ENCODE measurements at regions of chr1 and their contacts with region 1.

Region 1: DNA sequence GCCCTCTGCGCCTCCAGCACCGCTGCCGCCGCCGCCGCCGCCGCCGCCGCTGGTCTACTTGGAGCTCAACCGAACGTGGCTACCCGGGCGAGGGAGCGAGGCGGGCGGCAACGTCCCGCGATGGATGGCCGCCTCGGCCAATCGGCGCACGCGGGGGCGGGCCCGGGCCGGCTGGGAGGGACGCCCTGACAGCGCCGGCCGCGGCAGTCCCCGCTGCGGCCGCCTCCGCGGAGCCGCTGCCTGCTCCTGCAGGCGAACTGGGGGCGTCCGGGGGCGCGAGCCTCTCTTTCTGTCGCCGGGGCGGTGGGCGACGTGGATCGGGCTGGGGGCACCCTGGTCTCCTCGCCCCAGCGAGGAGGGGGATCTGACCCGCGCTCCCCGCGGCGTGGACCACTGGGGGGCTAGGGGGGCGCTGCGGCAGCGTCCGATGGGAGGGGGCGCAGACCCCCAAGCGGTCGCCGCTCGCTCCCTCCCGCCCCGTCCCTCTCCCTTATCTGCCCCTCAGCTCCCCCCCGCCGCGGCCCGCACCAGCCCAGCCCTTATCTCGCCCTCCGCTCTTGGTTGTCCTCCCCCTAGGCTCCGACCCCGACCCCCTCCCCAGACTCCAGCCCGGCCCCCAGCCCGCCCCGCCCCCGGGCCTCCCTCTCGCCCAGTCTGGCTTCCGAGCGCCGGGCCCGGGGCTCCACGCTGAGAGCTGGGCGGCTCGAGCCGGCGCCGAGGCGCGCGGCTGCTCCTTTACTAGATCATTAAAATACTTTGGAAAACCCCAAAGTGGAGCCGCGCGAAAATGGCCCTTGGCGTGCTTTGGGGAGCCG is at the start of gene SSBP3:
- DNase-seq: peak; percentile 94 to 96 (median 94)
- ATAC-seq: peak; percentile 78 to 95 (median 90)
- H3K4me3 ChIP-seq: peak within 1 kb of the TSS; percentile 74 to 98 (median 90)
- H3K27ac ChIP-seq: peak within 1 kb of the TSS; percentile 72 to 97 (median 92)
- H3K4me1 ChIP-seq: peaks cover 4 to 56% (median 37%) of the 10 kb centered on the region in 12 donors
- H3K27me3 ChIP-seq: no peaks in the 10 kb centered on the region
- CTCF ChIP-seq: peak in 3 of 12 donors; percentile 4 to 31 (median 15)
- POLR2A ChIP-seq: peak; percentile 71 to 97
- total RNA-seq, gene SSBP3: 20.8 to 61.8 (median 48.3) TPM

Region 2: DNA sequence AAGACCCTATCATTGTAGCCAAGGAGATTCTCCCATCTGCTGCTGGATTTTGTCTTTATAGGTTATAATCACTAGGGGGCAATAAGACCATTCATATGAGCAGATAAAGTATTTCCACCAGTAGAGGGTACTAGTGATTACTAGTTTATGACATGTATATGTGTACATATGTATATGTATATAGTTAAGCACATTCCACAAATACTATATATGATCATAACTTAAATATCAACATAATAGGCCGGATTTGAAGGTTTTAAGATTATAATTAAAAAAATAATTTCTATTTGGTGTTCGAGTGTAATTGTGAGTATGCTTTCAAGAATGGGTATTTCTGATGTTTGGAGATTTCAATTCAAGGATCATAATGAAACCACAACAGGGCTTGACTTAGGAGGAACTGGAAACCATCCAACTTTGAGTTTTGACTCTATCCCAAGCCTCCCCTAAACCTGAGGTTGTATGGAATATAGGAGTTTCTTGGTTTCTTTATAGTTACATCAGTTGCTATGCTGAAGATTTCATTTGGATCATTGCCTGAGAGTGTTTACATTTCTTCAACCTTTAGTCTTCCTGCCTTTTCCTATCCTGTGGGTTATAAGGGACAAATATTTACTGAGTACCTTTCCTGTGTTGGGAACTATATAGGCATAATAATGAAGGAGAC is 336.2 kb before region 1 on chr1:
- intact Hi-C with region 1: loop called in 3 of 10 experiments (anchors 5 to 10 kb)
- DNase-seq: no peak
- ATAC-seq: peak; percentile 51 to 72 (median 60)
- H3K4me3 ChIP-seq: no peak overlapping the region
- H3K27ac ChIP-seq: no peak overlapping the region
- H3K4me1 ChIP-seq: no peaks in the 10 kb centered on the region
- H3K27me3 ChIP-seq: no peaks in the 10 kb centered on the region
- CTCF ChIP-seq: peak; percentile 53 to 90 (median 78)
- POLR2A ChIP-seq: no peak

Region 3: DNA sequence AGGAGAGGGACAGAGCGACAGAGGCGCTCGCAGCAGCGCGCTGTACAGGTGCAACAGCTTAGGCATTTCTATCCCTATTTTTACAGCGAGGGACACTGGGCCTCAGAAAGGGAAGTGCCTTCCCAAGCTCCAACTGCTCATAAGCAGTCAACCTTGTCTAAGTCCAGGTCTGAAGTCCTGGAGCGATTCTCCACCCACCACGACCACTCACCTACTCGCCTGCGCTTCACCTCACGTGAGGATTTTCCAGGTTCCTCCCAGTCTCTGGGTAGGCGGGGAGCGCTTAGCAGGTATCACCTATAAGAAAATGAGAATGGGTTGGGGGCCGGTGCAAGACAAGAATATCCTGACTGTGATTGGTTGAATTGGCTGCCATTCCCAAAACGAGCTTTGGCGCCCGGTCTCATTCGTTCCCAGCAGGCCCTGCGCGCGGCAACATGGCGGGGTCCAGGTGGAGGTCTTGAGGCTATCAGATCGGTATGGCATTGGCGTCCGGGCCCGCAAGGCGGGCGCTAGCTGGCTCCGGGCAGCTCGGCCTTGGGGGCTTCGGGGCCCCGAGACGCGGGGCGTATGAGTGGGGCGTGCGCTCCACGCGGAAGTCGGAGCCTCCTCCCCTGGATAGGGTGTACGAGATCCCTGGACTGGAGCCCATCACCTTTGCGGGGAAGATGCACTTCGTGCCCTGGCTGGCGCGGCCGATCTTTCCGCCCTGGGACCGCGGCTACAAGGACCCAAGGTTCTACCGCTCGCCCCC is 206.6 kb before region 1 on chr1 and contains the starts of genes CYB5RL and MRPL37:
- intact Hi-C with region 1: loop called in 7 of 10 experiments (anchors 2 to 10 kb)
- DNase-seq: peak; percentile 92 to 96 (median 94)
- ATAC-seq: peak; percentile 98 to 100 (median 99)
- H3K4me3 ChIP-seq: peak within 1 kb of the TSS; percentile 62 to 96 (median 84)
- H3K27ac ChIP-seq: peak within 1 kb of the TSS; percentile 6 to 91 (median 72)
- H3K4me1 ChIP-seq: peaks cover 0 to 30% (median 19%) of the 10 kb centered on the region in 12 donors
- H3K27me3 ChIP-seq: no peaks in the 10 kb centered on the region
- CTCF ChIP-seq: no peak
- POLR2A ChIP-seq: peak in 1 of 2 donors; percentile 65
- total RNA-seq, gene CYB5RL: 2.8 to 7.5 (median 4.4) TPM
- total RNA-seq, gene MRPL37: 75.6 to 122 (median 89.3) TPM

Region 4: DNA sequence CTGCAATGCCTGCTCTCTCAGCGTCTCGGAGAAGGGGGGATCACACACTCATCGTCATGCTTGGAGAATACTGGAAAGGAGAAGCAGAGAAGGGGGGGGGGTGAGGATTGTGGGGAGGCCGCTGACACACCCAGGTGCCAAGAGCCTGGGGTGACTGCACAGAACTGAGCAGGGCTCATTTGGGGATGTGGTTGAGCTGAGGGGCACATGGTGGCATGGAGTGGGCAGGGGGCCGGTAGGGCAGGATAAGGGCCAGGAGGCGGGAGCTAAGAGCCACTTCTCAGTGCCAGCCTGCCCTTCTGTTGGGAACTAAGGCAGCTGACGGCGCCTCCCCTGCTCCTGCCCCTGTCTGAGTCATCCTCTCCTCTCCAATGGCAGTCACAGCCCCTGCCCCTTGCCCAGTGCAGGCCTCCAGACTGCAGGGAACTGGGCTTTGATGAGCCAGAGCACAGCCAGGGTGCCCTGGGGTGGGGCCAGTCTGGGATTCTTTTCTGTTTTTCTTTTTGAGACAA is 179.4 kb before region 1 on chr1:
- intact Hi-C with region 1: loop called in 1 of 10 experiments (anchors 10 kb)
- DNase-seq: no peak
- ATAC-seq: peak in 2 of 4 donors; percentile 44 to 55
- H3K4me3 ChIP-seq: no peak overlapping the region
- H3K27ac ChIP-seq: no peak overlapping the region
- H3K4me1 ChIP-seq: peaks cover 0 to 24% (median 4%) of the 10 kb centered on the region in 12 donors
- H3K27me3 ChIP-seq: no peaks in the 10 kb centered on the region
- CTCF ChIP-seq: no peak
- POLR2A ChIP-seq: no peak

Region 5: DNA sequence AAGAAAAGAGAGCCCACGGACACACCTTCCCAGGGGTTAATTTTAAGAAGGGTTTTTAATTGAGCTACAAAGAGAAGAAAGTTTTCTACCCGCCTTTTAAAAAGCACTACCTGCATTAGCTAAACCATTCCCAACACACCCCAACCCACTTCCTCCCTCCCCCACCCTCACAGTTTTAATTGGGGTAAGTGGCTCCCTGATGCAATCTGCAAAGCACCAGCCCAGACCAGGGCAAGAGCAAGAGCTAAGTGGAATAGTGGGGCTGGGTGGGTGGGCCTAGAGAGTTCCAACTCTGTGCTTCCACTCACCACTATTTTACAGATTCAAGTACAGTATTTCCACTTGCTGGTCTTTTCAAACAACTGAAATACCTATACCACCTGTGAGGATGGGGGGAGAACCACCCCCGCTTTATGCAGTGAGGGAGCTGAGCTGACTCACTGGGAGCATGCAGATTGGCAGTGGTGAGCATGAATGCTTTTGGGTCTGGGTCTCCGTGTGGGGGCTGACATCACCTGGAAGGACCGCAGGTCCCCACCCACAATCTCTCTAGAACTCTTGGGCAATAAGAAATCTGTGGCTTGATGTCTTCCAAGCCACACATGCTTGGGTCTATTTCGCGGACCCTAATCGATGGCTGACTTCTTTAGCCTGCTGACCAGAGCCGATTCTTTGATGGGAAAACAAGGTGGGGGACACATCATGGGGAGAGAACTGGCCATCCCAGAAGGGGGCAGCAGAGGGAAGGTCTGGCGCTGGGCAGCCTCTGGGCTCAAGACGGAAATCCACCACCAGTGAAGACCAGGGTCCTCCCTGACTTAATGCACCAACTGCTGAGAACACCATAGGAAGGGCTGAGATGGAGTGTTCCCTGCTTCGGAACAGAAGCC is 95.9 kb before region 1 on chr1:
- intact Hi-C with region 1: loop called in 9 of 10 experiments (anchors 1 to 5 kb)
- DNase-seq: peak in 3 of 5 donors; percentile 45 to 64 (median 56)
- ATAC-seq: peak; percentile 10 to 50 (median 36)
- H3K4me3 ChIP-seq: no peak overlapping the region
- H3K27ac ChIP-seq: peak overlapping the region in 5 of 12 donors; percentile 20 to 67 (median 42)
- H3K4me1 ChIP-seq: peaks cover 0 to 87% (median 52%) of the 10 kb centered on the region in 12 donors
- H3K27me3 ChIP-seq: no peaks in the 10 kb centered on the region
- CTCF ChIP-seq: peak; percentile 41 to 72 (median 61)
- POLR2A ChIP-seq: no peak

Region 6: GRCh38 chr1:54361342-54361741 is 45.2 kb before region 1 on chr1:
- intact Hi-C with region 1: loop called in 7 of 10 experiments (anchors 2 to 10 kb)
- DNase-seq: peak in 1 of 5 donors; percentile 29
- ATAC-seq: no peak
- H3K4me3 ChIP-seq: no peak overlapping the region
- H3K27ac ChIP-seq: peak overlapping the region in 2 of 12 donors; percentile 4 to 27
- H3K4me1 ChIP-seq: peaks cover under 1 to 79% (median 50%) of the 10 kb centered on the region in 12 donors
- H3K27me3 ChIP-seq: no peaks in the 10 kb centered on the region
- CTCF ChIP-seq: peak in 8 of 12 donors; percentile 7 to 46 (median 28)
- POLR2A ChIP-seq: no peak

Region 7: GRCh38 chr1:54547601-54548388 is 141.2 kb after region 1 on chr1 and contains the start of gene ACOT11:
- intact Hi-C with region 1: loop called in 1 of 10 experiments (anchors 5 kb)
- DNase-seq: peak; percentile 89 to 96 (median 90)
- ATAC-seq: peak; percentile 89 to 92 (median 92)
- H3K4me3 ChIP-seq: peak within 1 kb of the TSS; percentile 19 to 72 (median 56)
- H3K27ac ChIP-seq: peak within 1 kb of the TSS; percentile 82 to 98 (median 90)
- H3K4me1 ChIP-seq: peaks cover 0 to 38% (median 12%) of the 10 kb centered on the region in 12 donors
- H3K27me3 ChIP-seq: no peaks in the 10 kb centered on the region
- CTCF ChIP-seq: peak; percentile 22 to 63 (median 44)
- POLR2A ChIP-seq: peak in 1 of 2 donors; percentile 60
- total RNA-seq, gene ACOT11: 33.2 to 69.3 (median 55.9) TPM